Activated naive CD4-positive, alpha-beta T cell treated with anti-CD3 and anti-CD28 coated beads for 36 hours (primary cell): ENCODE measurements at regions of chr19 and their contacts with region 1.

Region 1: DNA sequence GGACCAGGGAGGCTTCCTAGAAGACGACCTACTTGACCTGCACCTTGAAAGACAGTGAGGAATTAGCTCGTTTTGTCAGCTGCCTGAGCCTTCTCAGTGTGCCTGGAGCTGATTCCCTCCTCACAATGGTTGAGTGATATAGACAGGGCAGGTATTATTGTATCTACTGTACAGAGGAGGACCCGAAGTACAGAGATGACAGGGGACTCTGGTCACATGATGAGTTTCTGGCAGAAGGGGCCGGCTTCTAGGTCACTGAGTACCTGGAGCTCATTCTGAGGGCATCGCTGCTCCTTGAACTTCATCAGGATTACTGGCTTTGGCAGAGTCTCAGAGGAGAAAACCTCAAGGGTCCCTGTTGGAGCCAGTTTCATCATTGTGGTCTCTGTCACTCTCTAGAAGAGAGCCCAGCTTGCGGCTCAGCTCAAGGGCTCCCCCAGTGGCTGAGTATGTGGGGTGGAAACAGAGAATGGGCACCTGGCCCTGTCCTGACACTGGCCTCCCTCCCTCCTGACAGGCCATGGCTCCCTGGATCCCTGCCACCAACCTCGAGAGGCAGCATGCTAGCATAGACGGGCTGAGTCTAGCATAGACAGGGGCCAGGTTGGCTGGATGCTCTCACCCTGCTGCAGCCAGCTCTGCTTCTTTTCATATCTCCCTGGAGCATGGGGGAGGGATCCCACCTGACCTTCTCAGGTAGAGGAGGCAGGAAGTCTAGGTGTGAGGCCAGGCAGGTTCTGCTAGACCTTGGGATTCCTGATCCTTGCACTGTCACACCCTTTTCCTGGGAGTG is 38.7 kb downstream of the NFIX start:
- DNase-seq: peak; percentile 56
- H3K4me3 Mint-ChIP-seq: no peak overlapping the region
- H3K27ac Mint-ChIP-seq: no peak overlapping the region
- H3K4me1 Mint-ChIP-seq: no peaks in the 10 kb centered on the region
- H3K27me3 Mint-ChIP-seq: no peaks in the 10 kb centered on the region

Region 2: DNA sequence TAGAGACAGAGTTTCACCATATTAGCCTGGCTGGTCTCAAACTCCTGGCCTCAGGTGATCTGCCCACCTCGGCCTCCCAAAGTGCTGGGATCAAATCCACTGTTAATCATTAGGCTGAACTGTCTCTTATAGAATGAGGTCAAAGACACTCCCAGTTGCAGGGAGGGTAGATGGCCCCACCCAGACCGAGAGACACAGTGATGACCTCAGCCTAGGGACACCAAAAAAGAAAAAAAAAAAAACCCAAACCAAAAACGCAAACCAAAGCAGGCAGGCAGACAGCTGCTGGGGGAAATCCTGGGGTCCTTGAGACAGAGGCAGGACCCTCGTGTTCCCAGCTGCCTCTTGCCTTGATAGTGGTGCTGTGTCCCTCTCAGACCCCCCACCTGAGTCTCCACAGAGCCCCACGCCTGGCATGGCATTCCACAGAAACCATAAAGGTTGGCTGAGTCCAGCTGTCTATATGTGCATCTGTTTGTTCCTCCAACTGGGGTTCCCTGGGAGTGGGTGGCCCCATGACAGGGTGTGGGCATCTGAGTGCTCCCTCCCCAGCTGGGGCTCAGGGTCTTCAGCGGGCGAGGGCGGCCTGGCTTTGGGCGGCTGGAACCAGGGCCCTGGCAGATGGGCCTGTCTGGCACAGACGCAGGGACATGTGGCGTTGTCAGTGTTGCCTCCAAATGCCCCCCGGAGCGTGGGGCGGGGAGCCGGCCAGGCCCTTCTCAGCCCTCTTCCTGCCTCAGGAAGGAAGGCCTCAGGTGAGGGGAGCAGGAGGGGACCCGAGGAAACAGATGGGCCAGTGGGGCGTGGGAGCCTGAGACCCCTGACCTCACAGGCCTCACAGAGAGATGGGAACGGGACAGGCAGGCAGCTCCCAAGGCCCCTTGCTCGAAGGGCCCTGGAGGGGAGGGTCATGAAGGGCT is 59.5 kb before region 1 on chr19:
- CTCF ChIA-PET with region 1: interaction called, 18 read pairs
- intact Hi-C with region 1: no loop called
- DNase-seq: no peak
- H3K4me3 Mint-ChIP-seq: no peak overlapping the region
- H3K27ac Mint-ChIP-seq: no peak overlapping the region
- H3K4me1 Mint-ChIP-seq: peaks cover 8% of the 10 kb centered on the region
- H3K27me3 Mint-ChIP-seq: peaks cover 10% of the 10 kb centered on the region

Region 3: DNA sequence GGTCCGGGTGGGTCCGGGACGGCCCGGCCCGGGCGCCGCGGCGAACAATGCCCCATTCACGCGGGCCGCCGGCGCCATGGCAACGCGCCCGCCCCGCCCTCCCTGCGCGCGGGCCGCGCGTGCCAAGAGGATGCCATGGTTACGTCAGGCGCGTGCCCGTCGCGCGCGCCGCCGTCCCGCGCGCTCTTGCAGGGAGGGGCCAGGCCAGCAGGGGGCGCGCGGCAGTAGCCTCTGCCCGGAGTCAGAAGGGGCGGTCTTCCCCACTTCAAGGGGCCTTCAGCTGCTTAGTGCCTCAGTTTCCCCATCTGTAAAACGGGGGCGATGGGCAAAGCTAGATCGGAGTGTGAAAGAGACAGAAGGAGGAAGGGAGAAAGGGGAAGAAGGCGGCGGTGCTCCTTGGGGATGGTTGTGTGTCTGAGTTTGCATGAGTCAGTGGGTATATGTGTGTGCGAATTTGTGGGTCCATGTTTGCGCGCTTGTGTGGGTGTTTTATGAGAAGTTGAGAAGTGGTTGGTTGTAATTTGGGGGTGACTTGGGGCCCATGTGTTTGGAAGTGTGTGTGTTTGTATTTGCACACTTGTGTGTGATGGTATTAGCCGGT is 50.4 kb before region 1 on chr19:
- CTCF ChIA-PET with region 1: interaction called, 7 read pairs
- intact Hi-C with region 1: loop called (anchors 1 kb)
- DNase-seq: peak; percentile 81
- H3K4me3 Mint-ChIP-seq: no peak overlapping the region
- H3K27ac Mint-ChIP-seq: no peak overlapping the region
- H3K4me1 Mint-ChIP-seq: no peaks in the 10 kb centered on the region
- H3K27me3 Mint-ChIP-seq: no peaks in the 10 kb centered on the region

Region 4: GRCh38 chr19:13012690-13013608 is 21.1 kb before region 1 on chr19:
- CTCF ChIA-PET with region 1: interaction called, 11 read pairs
- intact Hi-C with region 1: no loop called
- DNase-seq: peak; percentile 83
- H3K4me3 Mint-ChIP-seq: peak overlapping the region; percentile 73
- H3K27ac Mint-ChIP-seq: peak overlapping the region; percentile 83
- H3K4me1 Mint-ChIP-seq: peaks cover 22% of the 10 kb centered on the region
- H3K27me3 Mint-ChIP-seq: peaks cover 40% of the 10 kb centered on the region

Region 5: DNA sequence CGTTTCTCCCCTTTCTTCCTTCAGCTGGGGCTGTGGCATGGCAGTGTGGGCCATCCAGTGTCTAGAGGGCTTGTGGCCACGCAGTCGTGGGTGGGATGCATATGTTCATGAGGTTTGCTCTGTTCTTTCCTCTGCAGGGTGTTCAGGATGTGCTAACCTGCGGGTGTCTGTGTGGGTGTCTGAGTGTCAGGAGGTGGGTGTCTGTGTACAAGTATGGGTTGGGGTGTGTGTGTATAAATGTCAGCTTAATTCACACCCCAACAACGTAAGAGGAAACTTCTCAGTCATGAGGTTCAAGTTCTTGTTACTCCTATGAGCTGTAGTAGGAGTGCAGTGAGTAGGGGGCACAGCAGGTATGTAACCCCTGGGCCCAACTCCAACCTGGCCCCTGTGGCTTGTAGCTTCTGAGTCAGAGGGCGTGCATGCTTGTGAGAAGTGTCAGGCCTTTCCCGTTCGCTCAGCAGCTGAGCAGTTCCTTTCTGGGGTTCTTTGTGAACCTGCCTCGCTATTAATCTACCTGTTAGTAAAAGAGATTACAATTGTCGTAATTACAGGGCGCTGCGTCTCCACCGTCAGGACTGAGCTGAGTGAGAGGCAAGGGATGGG is 10.3 kb after region 1 on chr19:
- CTCF ChIA-PET with region 1: interaction called, 10 read pairs
- intact Hi-C with region 1: no loop called
- DNase-seq: no peak
- H3K4me3 Mint-ChIP-seq: no peak overlapping the region
- H3K27ac Mint-ChIP-seq: no peak overlapping the region
- H3K4me1 Mint-ChIP-seq: peaks cover 4% of the 10 kb centered on the region
- H3K27me3 Mint-ChIP-seq: no peaks in the 10 kb centered on the region

Region 6: DNA sequence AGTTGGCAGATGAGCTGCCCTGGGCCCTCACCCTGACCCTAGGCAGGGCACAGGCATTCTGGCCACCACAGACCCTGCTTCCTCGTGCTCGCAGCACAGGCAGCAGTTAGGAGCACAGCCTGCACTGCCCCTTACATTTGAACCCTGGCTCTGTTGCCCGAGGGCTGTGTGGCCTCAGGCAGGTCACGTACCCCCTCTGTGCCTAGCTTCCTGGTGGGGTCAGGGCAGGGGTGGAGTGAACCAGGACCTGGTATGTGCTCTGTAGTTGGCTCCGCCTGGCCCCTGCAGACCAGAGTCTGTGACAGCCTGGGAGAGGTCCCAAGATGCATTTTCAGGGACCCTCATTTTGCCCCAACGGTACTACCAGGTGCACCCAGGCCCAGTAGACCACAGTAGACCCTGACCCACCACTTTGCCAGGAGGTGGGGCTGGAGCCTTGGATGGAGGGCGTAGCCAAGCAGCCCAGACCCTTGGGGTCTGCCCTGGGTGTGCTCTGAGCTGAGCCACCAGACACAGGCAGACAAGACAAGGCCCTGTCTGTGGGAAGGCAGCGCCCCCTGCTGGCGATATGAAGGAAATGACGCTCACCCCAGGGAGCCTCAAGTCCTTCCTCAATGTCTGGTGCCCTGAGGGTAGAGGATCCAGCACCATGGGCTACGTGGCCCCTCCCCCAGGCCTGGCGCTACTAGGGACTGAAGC is 59.5 kb after region 1 on chr19:
- CTCF ChIA-PET with region 1: interaction called, 12 read pairs
- intact Hi-C with region 1: loop called (anchors 1 kb)
- DNase-seq: peak; percentile 90
- H3K4me3 Mint-ChIP-seq: no peak overlapping the region
- H3K27ac Mint-ChIP-seq: no peak overlapping the region
- H3K4me1 Mint-ChIP-seq: peaks cover 21% of the 10 kb centered on the region
- H3K27me3 Mint-ChIP-seq: peaks cover 29% of the 10 kb centered on the region